ENCODE measurements at regions of chr3 and their contacts with region 1.

Region 1: DNA sequence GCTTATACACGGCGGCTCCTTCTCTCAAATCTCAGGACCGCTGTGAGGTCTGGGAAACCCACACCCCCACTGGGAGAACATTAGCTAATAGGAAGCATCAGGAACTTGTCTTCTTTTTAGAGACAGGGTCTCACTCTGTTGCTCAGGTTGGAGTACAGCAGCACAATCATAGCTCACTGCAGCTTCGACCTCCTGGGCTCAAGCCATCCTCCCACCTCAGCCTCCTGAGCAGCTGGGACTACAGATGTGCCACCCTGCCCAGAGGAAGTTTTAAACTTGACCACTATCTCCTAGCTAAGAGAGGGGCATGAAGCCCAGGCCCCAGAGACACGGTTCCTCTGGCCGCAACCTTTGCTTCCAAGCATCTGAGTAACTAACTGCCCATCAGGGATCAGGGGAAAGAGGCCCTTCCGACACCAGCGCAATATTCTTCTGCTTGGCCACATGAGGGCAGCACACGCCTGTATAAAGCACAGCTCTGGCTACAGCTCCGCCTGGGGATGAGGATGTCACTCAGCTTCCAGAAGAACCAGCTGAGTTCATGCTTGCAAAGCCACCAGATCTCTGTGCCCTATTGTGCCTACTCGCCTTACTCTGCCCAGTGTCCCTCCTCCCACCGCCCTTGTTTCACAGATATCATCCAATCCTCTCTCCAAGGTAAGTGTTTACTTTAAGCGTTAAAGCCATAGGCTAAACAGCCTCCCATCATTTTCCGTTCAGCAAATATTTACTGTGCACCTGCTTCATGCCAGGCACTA is 57.5 kb upstream of the SLC6A11 start:
- DNase-seq: peak in 11 of 14 experiments; percentile 11 to 70 (median 33)
- ATAC-seq: peak; percentile 65
- H3K4me3 ChIP-seq: no peak overlapping the region
- H3K4me3 Mint-ChIP-seq: no peak overlapping the region
- H3K27ac ChIP-seq: no peak overlapping the region
- H3K27ac Mint-ChIP-seq: no peak overlapping the region
- H3K4me1 ChIP-seq: no peaks in the 10 kb centered on the region
- H3K4me1 Mint-ChIP-seq: no peaks in the 10 kb centered on the region
- H3K27me3 ChIP-seq: peaks cover 7 to 14% of the 10 kb centered on the region in 2 experiments
- H3K27me3 Mint-ChIP-seq: peaks cover 80% of the 10 kb centered on the region
- CTCF ChIP-seq: peak; percentile 64

Region 2: GRCh38 chr3:11006986-11007933 is 248.8 kb after region 1 on chr3:
- CTCF ChIA-PET with region 1: no interaction called
- POLR2A ChIA-PET with region 1: no interaction called
- intact Hi-C with region 1: no loop called
- DNase-seq: no peak
- ATAC-seq: no peak
- H3K4me3 ChIP-seq: no peak overlapping the region
- H3K4me3 Mint-ChIP-seq: no peak overlapping the region
- H3K27ac ChIP-seq: no peak overlapping the region
- H3K27ac Mint-ChIP-seq: no peak overlapping the region
- H3K4me1 ChIP-seq: no peaks in the 10 kb centered on the region
- H3K4me1 Mint-ChIP-seq: no peaks in the 10 kb centered on the region
- H3K27me3 ChIP-seq: no peaks in the 10 kb centered on the region
- H3K27me3 Mint-ChIP-seq: peaks cover 7% of the 10 kb centered on the region
- CTCF ChIP-seq: no peak

Region 3: GRCh38 chr3:11060500-11061251 is 302.2 kb after region 1 on chr3:
- CTCF ChIA-PET with region 1: no interaction called
- POLR2A ChIA-PET with region 1: no interaction called
- intact Hi-C with region 1: loop called in 1 of 2 experiments (anchors 10 kb)
- DNase-seq: peak in 11 of 14 experiments; percentile 4 to 57 (median 15)
- ATAC-seq: no peak
- H3K4me3 ChIP-seq: no peak overlapping the region
- H3K4me3 Mint-ChIP-seq: no peak overlapping the region
- H3K27ac ChIP-seq: no peak overlapping the region
- H3K27ac Mint-ChIP-seq: no peak overlapping the region
- H3K4me1 ChIP-seq: peaks cover 4% of the 10 kb centered on the region
- H3K4me1 Mint-ChIP-seq: no peaks in the 10 kb centered on the region
- H3K27me3 ChIP-seq: peaks cover 6 to 9% of the 10 kb centered on the region in 2 experiments
- H3K27me3 Mint-ChIP-seq: peaks cover 22% of the 10 kb centered on the region
- CTCF ChIP-seq: peak; percentile 65